Activated B cell treated with CpG ODN at 0.5 μM for 24 hours (primary cell): ENCODE measurements at regions of chr9 and their contacts with region 1.

Region 1: DNA sequence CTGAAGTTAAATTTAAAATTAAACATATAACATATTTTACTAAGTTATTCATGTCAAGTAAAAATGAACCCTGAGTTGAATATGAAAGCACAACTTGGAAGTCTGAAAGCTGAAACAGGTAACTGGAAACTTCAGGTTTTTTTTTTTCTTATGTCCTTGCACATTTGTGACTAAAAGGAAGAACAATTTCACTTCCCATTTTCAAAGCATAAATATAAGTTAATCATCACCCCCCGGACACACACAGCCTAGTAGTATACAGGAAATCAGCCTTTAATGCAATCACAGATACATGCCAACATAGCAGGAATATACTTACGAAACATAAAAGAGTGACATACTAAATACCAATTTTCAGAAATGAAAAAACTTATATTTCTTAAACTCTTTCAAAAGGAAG is 225.9 kb downstream of the RFX3 start:
- DNase-seq: no peak
- ATAC-seq: peak; percentile 93
- H3K4me3 Mint-ChIP-seq: no peak overlapping the region
- H3K27ac Mint-ChIP-seq: peak overlapping the region; percentile 51
- H3K4me1 Mint-ChIP-seq: peaks cover 22% of the 10 kb centered on the region
- H3K27me3 Mint-ChIP-seq: no peaks in the 10 kb centered on the region
- CTCF ChIP-seq: no peak

Region 2: DNA sequence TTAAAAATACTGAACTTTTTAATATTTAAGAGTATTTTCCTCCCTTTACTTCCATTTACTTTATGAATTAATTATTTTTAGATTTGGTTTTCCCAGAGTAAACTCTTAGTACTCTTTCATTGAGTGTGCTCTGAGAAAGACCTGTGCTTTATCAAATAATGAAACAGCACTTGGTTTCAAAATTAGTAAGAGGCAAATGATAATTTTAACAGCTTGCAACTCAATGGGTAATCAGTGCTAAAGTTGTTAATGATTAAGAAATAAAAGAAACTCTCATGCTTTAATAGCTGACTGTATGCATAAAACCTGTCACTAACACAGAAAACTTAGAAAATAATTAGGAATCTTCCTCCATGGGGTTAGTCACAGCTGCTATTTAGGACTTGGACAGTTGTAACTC is 18.5 kb before region 1 on chr9:
- CTCF ChIA-PET with region 1: no interaction called
- POLR2A ChIA-PET with region 1: no interaction called
- intact Hi-C with region 1: loop called (anchors 2 kb)
- DNase-seq: no peak
- ATAC-seq: no peak
- H3K4me3 Mint-ChIP-seq: no peak overlapping the region
- H3K27ac Mint-ChIP-seq: no peak overlapping the region
- H3K4me1 Mint-ChIP-seq: peaks cover 4% of the 10 kb centered on the region
- H3K27me3 Mint-ChIP-seq: no peaks in the 10 kb centered on the region
- CTCF ChIP-seq: no peak

Region 3: DNA sequence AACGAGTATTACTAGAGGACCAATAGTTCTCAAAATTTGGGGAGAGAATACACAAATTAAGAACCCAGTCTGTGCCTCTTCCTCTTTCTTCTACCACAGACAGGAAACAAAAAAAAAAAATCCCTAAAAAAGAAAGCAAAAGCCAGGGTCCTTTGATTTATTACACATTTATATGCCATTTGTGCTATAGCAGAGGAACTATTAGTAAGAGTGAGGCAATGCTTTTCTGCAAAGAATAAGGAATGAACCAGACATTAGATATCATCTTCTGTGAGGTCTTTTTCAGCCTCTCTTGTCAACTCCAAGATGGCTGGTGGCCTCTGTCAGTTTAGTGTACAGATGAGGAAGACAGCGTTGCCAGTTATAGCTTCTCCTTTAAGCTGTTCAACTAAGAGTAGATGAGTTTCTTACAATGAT is 98.4 kb after region 1 on chr9:
- CTCF ChIA-PET with region 1: no interaction called
- POLR2A ChIA-PET with region 1: no interaction called
- intact Hi-C with region 1: loop called (anchors 10 kb)
- DNase-seq: no peak
- ATAC-seq: peak; percentile 65
- H3K4me3 Mint-ChIP-seq: peak overlapping the region; percentile 79
- H3K27ac Mint-ChIP-seq: peak overlapping the region; percentile 88
- H3K4me1 Mint-ChIP-seq: peaks cover 32% of the 10 kb centered on the region
- H3K27me3 Mint-ChIP-seq: no peaks in the 10 kb centered on the region
- CTCF ChIP-seq: no peak

Region 4: DNA sequence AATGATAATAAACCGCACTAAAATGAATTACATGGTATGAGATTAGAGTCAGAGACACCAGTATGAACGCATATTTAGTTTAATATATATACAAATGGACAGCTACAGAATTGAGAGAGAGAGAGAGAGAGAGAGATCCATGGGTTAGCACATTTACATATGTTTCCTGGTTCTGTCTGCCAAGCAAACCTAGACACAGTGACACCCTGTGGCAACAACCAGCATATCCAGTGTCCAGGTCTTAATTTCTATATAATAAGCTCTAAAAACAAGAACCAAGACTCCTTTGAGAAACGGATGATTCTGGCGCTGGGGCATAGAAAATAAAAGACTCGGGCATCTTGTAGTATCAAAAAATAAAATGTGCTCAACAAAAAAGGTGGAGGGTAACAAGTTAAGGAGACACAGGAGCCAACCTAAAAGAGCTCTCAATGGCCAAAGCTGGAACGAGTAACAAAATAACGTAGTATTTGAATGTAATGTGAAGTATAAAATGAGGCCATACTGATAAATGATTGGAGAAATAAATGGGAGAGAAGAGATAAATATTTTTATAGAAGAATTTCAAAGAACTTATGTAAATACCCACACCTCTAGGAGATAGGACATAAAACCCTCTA is 141.4 kb after region 1 on chr9:
- CTCF ChIA-PET with region 1: no interaction called
- POLR2A ChIA-PET with region 1: no interaction called
- intact Hi-C with region 1: loop called (anchors 10 kb)
- DNase-seq: no peak
- ATAC-seq: peak; percentile 92
- H3K4me3 Mint-ChIP-seq: no peak overlapping the region
- H3K27ac Mint-ChIP-seq: no peak overlapping the region
- H3K4me1 Mint-ChIP-seq: peaks cover 11% of the 10 kb centered on the region
- H3K27me3 Mint-ChIP-seq: no peaks in the 10 kb centered on the region
- CTCF ChIP-seq: no peak